Testis (tissue), 5 donors: ENCODE measurements at regions of chr14 and their contacts with region 1.

Region 1: DNA sequence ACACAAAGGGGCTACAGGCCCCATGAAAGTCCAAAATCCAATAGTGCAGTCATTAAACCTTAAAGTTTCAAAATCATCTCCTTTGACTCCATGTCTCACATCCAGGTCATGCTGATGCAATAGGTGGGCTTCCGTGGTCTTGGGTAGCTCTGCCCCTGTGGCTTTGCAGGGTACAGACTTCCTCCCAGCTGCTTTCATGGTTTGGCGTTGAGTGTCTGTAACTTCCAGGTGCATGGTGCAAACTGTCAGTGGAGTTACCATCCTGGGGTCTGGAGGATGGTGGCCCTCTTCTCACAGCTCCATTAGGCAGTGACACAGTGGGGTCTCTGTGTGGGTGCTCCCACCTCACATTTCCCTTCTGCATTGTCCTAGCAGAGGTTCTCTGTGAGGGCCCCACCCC is 8.5 kb upstream of the OR4Q2 start:
- DNase-seq: no peak
- H3K4me3 ChIP-seq: no peak overlapping the region
- H3K27ac ChIP-seq: no peak overlapping the region
- H3K4me1 ChIP-seq: no peaks in the 10 kb centered on the region
- H3K27me3 ChIP-seq: no peaks in the 10 kb centered on the region
- CTCF ChIP-seq: no peak
- POLR2A ChIP-seq: no peak

Region 2: GRCh38 chr14:19930617-19931016 is 62.8 kb before region 1 on chr14 and contains the start of gene OR4K1:
- intact Hi-C with region 1: loop called (anchors 10 kb)
- DNase-seq: no peak
- H3K4me3 ChIP-seq: no peak within 1 kb of the TSS
- H3K27ac ChIP-seq: no peak within 1 kb of the TSS
- H3K4me1 ChIP-seq: no peaks in the 10 kb centered on the region
- H3K27me3 ChIP-seq: no peaks in the 10 kb centered on the region
- CTCF ChIP-seq: no peak
- POLR2A ChIP-seq: no peak
- total RNA-seq, gene OR4K1: not detected